ENCODE measurements at regions of chr4 and their contacts with region 1.

Region 1: DNA sequence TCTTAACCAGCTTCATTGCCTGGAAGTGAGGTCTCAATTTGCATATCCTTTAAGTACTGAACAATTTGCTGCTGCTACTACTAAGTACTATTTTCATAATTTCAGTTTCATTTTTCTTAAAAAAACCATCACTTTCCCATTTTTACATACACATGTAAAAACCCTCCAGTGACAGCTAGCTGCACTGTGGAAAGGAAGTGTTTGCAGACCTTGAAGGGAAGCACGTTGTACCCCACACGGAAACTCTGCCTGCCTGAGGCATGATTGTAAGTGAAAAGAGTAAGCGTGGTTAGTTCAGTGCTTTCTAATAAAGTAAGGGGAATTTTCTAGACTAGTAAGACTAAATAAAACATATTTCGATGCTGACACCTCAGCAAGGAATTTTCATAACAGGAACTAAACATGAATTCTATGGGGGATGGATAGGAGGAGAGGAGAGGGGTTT is 103.6 kb downstream of the RAPGEF2 start:
- DNase-seq: peak; percentile 31
- H3K4me3 Mint-ChIP-seq: peak overlapping the region; percentile 41
- H3K27ac Mint-ChIP-seq: peak overlapping the region; percentile 83
- H3K4me1 Mint-ChIP-seq: peaks cover 54% of the 10 kb centered on the region
- H3K27me3 Mint-ChIP-seq: no peaks in the 10 kb centered on the region

Region 2: DNA sequence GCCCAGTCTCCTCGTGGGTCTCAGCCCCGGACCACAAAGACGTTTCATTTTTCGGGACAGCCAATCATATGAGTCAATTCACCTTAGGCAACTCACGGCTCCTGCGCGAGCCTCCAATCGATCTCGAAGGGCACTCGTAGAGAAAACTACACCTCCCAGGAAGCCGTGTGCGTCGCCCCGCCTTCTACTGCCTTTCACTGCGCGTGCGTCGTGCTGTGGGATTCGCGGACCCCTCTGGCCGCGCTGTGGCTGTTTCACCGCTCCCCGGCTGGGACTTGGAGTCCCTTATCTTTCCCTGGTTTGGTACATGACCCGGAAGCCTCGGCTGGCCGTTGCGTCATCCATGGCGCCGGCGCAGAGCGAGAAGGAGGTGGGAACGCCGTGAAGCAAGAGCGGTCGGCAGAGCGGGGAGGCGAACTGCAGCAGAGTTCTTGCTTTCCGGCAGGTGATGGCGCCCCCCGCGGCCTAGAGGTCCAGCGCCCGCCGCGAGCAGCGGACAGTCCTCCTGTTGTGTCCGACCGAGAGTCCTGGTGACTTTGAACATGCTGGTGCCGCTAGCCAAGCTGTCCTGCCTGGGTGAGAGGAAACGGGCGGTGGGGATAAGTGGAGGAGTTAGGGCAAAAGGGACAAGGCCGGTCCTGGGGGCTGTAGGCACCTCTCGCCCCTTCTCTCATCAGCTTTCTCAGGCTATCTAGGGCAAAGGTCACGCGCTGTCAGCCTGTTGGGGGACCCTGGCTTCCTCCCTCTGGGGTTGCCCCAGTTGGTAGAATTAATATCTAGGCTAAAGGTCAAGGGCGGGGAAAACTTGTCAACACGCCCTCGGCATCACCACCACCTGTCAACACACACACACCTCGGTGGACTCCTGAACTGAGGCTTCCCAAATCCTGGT is 534.3 kb before region 1 on chr4 and contains the start of gene ETFDH:
- intact Hi-C with region 1: loop called (anchors 1 kb)
- DNase-seq: peak; percentile 98
- H3K4me3 Mint-ChIP-seq: peak within 1 kb of the TSS; percentile 99
- H3K27ac Mint-ChIP-seq: peak within 1 kb of the TSS; percentile 96
- H3K4me1 Mint-ChIP-seq: peaks cover 46% of the 10 kb centered on the region
- H3K27me3 Mint-ChIP-seq: peaks cover 2% of the 10 kb centered on the region
- total RNA-seq, gene ETFDH: 19.9 and 21.5 TPM in 2 replicates

Region 3: DNA sequence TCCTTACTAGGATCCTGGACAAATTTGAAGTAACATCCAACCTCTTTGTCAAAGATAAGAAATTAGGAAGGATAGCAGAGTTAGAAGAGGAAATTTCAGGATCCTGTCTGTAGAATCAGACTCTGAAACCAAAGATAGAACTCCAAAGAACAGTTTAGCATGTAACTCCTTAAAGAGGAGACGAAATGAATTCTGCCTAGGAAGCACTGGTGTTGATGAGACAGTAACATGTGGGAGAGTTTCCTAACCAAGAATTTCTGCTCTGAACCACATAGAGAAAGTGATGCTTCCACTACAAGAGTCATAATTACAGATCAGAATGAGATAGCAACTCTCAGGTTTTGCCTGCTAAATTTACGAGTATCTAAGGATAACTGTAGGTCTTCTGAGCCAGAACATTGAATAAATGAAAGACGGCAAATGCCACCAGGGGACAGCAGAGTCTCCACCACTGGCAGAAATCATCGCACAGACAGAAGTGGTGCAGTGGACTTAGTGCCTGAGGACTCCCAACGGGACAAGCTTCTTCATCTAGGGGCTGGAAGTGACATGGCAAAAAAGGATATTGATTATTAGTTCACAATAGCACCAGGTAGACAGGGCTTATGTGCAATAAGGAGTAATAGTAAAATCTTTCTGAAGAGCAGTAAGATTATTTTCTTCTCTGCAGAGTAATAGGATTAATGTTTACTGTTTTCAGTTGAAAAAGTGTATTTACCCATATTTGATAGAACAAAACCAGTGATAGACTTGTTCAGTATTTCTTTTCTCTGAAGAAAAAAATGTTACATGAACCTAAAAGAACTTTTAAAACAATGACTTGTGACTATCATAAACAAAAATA is 476.5 kb before region 1 on chr4:
- intact Hi-C with region 1: loop called (anchors 1 kb)
- DNase-seq: peak; percentile 32
- H3K4me3 Mint-ChIP-seq: no peak overlapping the region
- H3K27ac Mint-ChIP-seq: no peak overlapping the region
- H3K4me1 Mint-ChIP-seq: peaks cover 33% of the 10 kb centered on the region
- H3K27me3 Mint-ChIP-seq: peaks cover 18% of the 10 kb centered on the region

Region 4: DNA sequence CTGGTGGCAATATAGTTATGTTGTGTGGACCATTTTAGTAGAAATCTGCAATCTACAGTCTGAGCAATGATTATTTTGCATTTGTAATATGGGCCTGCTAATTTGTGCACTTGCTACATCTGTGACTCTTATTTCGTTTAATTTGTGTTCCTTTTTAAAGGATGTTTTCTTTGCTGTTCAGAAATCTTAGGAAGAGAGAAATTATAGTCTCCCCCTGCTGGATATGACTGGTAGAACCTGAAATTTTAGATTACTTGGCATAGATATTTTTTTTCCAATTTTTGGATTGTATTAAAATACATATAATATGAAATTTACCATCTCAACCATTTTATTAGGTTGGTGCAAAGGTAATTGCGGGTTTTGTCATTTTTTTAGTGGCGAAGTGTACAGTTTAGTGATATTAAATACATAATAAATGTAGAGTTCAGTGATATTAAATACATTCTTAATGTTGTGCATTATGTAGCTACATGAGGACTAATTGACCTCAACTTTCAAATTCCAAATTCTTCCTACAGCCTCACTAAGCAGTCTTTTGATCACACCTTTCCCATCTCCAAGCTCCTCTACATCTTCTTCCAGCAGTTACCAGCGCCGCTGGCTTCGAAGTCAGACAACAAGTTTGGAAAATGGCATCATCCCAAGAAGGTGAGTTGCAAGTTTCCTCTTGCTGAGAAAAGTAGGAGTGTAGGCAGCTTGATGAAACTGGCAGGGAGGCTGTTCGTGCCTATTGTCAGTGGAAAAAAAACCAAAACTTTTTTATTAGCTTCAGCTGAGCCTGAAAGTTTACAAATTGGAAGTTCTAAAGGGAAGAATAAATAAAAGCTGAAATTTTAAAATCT is 355.4 kb before region 1 on chr4:
- intact Hi-C with region 1: loop called (anchors 1 kb)
- DNase-seq: no peak
- H3K4me3 Mint-ChIP-seq: no peak overlapping the region
- H3K27ac Mint-ChIP-seq: no peak overlapping the region
- H3K4me1 Mint-ChIP-seq: peaks cover 14% of the 10 kb centered on the region
- H3K27me3 Mint-ChIP-seq: no peaks in the 10 kb centered on the region

Region 5: GRCh38 chr4:159077702-159078495 is 128.6 kb before region 1 on chr4:
- intact Hi-C with region 1: loop called (anchors 1 kb)
- DNase-seq: no peak
- H3K4me3 Mint-ChIP-seq: peak overlapping the region; percentile 53
- H3K27ac Mint-ChIP-seq: peak overlapping the region; percentile 22
- H3K4me1 Mint-ChIP-seq: peaks cover 24% of the 10 kb centered on the region
- H3K27me3 Mint-ChIP-seq: peaks cover 2% of the 10 kb centered on the region

Region 6: GRCh38 chr4:159175085-159175988 is 31.1 kb before region 1 on chr4:
- intact Hi-C with region 1: loop called (anchors 1 kb)
- DNase-seq: peak; percentile 51
- H3K4me3 Mint-ChIP-seq: no peak overlapping the region
- H3K27ac Mint-ChIP-seq: peak overlapping the region; percentile 49
- H3K4me1 Mint-ChIP-seq: peaks cover 64% of the 10 kb centered on the region
- H3K27me3 Mint-ChIP-seq: no peaks in the 10 kb centered on the region

Region 7: GRCh38 chr4:159446266-159446976 is 240.0 kb after region 1 on chr4:
- intact Hi-C with region 1: loop called (anchors 1 kb)
- DNase-seq: peak; percentile 10
- H3K4me3 Mint-ChIP-seq: no peak overlapping the region
- H3K27ac Mint-ChIP-seq: peak overlapping the region; percentile 35
- H3K4me1 Mint-ChIP-seq: no peaks in the 10 kb centered on the region
- H3K27me3 Mint-ChIP-seq: peaks cover 6% of the 10 kb centered on the region

Region 8: GRCh38 chr4:160835789-160836188 is 1629.3 kb after region 1 on chr4:
- intact Hi-C with region 1: no loop called
- DNase-seq: no peak
- H3K4me3 Mint-ChIP-seq: no peak overlapping the region
- H3K27ac Mint-ChIP-seq: no peak overlapping the region
- H3K4me1 Mint-ChIP-seq: no peaks in the 10 kb centered on the region
- H3K27me3 Mint-ChIP-seq: no peaks in the 10 kb centered on the region

Measured in activated T-helper 1 cell treated with anti-CD3 and anti-CD28 coated beads, Interleukin-12 subunit alpha, Interleukin-12 subunit beta, Interleukin-2, Interleukin-4 antibody, amounts not matched to agents 30 ng/mL and 10 ng/mL and 1 ng/mL, durations not matched to agents 14 hours and 24 hours and 36 hours (primary cell).